Activated T-helper 2 cell treated with anti-CD3 and anti-CD28 coated beads, Interferon-gamma antibody, Interleukin-2, Interleukin-4, amounts not matched to agents 10 μg/mL and 5 μg/mL and 100 μg/mL, durations not matched to agents 14 hours and 24 hours and 36 hours (primary cell): ENCODE measurements at regions of chr3 and their contacts with region 1.

Region 1: DNA sequence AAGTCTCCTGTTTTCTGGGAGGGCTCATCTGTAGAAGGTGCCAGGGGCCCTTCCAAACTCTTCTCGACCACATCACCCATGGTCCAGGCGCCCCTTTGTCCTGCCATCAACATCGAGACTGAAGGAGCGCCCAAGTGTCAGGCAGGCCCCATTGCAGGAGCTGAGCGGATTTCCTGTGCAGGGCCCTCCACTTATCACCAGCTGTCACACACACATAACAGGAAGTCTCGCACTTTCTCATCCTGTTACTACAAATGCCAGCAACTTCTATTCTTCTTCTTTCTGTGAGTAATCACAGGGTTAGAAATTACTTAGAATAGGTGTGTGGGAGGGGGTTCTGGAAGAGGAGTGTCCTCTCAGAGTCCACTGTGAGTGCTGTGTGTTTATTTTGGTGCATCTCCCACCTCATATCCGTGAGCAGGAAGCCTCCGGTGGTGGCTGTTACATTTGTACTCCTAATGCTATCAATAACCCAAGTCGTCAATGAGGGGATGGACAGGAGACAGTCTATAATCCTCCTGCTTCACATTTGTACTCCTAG is at the start of gene KLHL6:
- DNase-seq: peak; percentile 69
- H3K4me3 Mint-ChIP-seq: peak within 1 kb of the TSS; percentile 100
- H3K27ac Mint-ChIP-seq: peak within 1 kb of the TSS; percentile 100
- H3K4me1 Mint-ChIP-seq: peaks cover 50% of the 10 kb centered on the region
- H3K27me3 Mint-ChIP-seq: no peaks in the 10 kb centered on the region
- total RNA-seq, gene KLHL6: 29.5 and 29.7 TPM in 2 replicates

Region 2: DNA sequence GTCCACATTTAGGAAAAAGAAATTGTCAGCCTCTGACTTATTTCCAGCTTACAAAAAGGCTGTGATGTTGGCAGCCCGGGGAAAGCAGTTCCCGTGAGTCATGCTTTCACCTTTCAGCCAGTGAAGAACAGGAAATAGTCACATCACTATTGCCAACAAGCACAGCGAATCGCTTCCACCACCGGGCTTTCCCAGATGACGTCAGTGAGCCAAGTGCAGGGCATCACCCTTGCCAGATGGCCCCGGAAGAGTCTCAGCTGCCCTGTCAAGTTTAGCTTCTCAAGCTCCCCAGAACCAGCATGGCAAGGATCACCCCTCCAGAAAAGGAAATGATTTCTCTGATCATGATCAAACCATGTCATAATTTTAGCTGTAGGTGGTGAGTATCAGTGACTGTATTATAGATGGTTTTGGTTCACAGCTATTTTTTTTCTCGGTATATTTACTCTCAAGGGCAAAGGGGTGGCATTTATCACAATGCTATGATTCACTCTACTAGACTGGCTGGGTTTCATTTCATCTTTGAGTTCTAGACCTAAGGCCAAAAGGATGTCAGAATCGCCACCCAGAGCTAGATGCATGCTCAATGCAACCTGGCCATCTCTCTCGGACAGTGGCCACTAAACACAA is 269.7 kb before region 1 on chr3:
- intact Hi-C with region 1: loop called (anchors 2 kb)
- DNase-seq: peak; percentile 88
- H3K4me3 Mint-ChIP-seq: peak overlapping the region; percentile 57
- H3K27ac Mint-ChIP-seq: peak overlapping the region; percentile 95
- H3K4me1 Mint-ChIP-seq: peaks cover 35% of the 10 kb centered on the region
- H3K27me3 Mint-ChIP-seq: no peaks in the 10 kb centered on the region

Region 3: DNA sequence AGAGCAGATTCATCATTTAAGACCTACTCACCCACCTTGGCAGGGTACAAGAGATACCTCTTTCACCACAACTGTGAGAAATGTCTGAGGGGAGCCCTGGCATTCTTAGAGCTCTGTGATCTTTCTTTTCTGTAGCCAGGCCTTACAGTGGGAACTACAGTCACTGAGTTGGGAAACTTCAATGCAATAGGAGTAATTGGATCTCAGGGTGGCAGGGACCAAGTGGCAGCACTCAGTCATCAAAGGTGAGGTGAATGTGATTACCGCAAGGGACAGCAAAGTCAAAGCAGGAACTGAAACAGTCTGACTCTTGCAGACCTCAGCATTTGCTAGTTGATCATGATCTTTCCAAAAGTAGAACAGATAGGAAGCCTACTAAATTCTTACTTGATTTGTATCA is 120.0 kb before region 1 on chr3:
- intact Hi-C with region 1: loop called (anchors 1 kb)
- DNase-seq: no peak
- H3K4me3 Mint-ChIP-seq: no peak overlapping the region
- H3K27ac Mint-ChIP-seq: peak overlapping the region; percentile 15
- H3K4me1 Mint-ChIP-seq: peaks cover 68% of the 10 kb centered on the region
- H3K27me3 Mint-ChIP-seq: peaks cover 4% of the 10 kb centered on the region

Region 4: DNA sequence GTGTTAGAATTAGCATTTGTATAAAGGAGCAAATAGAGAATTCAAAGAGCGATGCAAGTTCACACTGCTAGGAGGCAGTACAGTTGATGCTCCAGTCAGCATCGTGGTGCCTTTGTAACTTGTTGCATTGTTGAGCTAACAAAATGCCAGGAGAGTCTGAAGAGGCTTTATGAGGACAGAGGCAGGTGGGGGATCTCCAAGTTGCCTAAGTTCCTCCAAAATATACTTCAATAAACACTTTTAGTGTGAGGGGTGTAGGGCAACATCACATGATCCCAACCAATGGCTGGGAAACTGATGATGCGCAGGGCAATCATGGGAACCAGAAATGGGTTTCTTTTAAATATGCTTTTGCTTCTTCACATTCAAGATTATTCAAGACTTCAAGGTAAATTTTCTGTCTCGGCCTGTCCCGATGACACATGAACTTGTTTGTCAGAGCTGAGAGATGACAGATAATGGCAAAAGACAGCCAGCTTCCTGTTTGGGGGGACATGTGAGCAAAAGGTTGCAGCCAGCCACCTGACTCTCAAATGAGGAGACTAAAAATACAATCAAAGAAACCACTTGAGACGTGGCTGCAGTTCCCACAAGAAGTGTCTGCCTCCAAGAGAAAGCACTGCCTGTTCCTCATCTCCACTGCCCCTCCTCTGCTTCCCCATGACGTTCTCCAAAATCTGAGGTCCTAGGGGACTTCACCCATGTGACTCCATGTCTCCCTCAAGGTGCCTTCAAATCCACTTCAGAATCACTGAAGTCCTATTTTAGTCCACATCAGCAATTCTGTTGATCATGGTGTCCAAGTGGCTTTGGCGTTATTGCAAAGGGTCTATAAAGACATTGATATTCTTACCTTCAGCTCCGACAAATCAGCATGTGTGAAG is 39.4 kb before region 1 on chr3:
- intact Hi-C with region 1: loop called (anchors 1 kb)
- DNase-seq: peak; percentile 59
- H3K4me3 Mint-ChIP-seq: no peak overlapping the region
- H3K27ac Mint-ChIP-seq: peak overlapping the region; percentile 90
- H3K4me1 Mint-ChIP-seq: peaks cover 66% of the 10 kb centered on the region
- H3K27me3 Mint-ChIP-seq: no peaks in the 10 kb centered on the region

Region 5: GRCh38 chr3:183537295-183537730 is 18.3 kb before region 1 on chr3:
- intact Hi-C with region 1: no loop called
- DNase-seq: no peak
- H3K4me3 Mint-ChIP-seq: no peak overlapping the region
- H3K27ac Mint-ChIP-seq: no peak overlapping the region
- H3K4me1 Mint-ChIP-seq: peaks cover 52% of the 10 kb centered on the region
- H3K27me3 Mint-ChIP-seq: no peaks in the 10 kb centered on the region

Region 6: GRCh38 chr3:183635431-183636220 is 80.0 kb after region 1 on chr3 and contains the start of gene KLHL24:
- intact Hi-C with region 1: loop called (anchors 1 kb)
- DNase-seq: peak; percentile 87
- H3K4me3 Mint-ChIP-seq: peak within 1 kb of the TSS; percentile 91
- H3K27ac Mint-ChIP-seq: peak within 1 kb of the TSS; percentile 93
- H3K4me1 Mint-ChIP-seq: peaks cover 24% of the 10 kb centered on the region
- H3K27me3 Mint-ChIP-seq: no peaks in the 10 kb centered on the region
- total RNA-seq, gene KLHL24: 8.7 and 10.5 TPM in 2 replicates

Region 7: DNA sequence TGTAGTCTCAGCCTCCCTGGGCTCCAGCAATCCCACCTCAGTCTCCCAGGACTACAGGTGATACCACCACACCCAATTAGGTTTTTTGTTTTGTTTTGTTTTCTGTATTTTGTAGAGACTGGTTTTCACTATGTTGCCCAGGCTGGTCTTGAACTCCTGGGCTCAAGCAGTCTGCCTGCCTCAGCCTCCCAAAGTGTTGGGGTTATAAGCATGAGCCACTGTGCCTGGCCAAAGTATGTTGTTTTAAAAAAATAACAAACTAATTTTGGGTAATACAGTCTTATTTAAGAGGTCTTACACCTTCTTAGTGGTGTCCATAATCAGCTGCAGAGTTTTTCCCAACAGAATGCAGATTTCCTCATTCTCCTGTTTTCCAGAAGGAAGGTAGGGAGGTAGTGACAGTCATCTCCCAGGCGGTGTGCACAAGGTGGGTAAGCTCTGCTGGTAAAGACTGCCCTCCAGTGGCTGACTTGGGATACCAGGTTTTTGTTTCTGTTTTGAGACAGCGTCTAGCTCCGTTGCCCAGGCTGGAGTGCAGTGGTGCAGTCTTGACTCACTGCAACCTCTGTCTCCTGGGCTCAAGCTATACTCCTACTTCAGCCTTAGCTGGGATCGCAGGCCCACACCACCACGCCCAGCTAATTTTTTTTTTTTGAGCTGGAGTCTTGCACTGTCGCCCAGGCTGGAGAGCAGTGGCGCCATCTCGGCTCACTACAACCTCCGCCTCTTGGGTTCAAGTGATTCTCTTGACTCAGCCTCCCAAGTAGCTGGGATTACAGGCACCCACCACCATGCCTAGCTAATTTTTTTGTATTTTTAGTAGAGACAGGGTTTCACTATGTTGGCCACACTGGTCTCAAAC is 211.4 kb after region 1 on chr3:
- intact Hi-C with region 1: loop called (anchors 5 kb)
- DNase-seq: peak; percentile 63
- H3K4me3 Mint-ChIP-seq: no peak overlapping the region
- H3K27ac Mint-ChIP-seq: peak overlapping the region; percentile 7
- H3K4me1 Mint-ChIP-seq: peaks cover 6% of the 10 kb centered on the region
- H3K27me3 Mint-ChIP-seq: no peaks in the 10 kb centered on the region